Endothelial cell of umbilical vein (primary cell): ENCODE measurements at regions of chr17 and their contacts with region 1.

Region 1: GRCh38 chr17:40331743-40332641 is 23.0 kb downstream of the RARA start:
- DNase-seq: peak; percentile 73
- H3K4me3 ChIP-seq: no peak overlapping the region
- H3K27ac ChIP-seq: peak overlapping the region; percentile 61
- H3K4me1 ChIP-seq: peaks cover 38% of the 10 kb centered on the region
- H3K27me3 ChIP-seq: no peaks in the 10 kb centered on the region
- CTCF ChIP-seq: no peak
- POLR2A ChIP-seq: peak; percentile 30

Region 2: DNA sequence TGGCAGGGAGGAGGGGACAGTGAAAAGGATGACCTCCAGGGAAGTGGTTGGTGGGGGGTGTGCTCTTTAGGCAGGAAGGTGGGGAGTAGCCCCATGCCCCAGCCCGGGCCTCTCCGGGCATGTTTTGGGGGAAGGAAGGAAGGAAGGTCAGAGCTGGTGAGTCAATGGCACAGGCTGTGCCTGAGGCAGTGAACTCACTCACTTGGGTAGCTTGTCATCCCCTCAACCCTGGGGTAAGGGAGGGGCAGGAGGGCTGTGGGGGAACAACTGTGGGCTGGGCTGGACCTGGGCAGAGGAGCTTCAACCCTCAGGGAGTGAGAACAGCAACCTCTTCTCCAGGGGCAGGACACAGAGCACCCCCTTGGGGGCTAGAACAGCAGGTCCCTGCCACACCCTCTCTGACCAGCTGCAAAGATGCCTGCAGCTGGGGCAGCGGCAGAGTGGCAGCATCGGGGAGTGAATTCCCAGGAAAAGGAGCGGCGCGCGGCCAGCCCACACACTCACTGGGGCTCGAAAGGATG is 310.5 kb before region 1 on chr17:
- CTCF ChIA-PET with region 1: no interaction called
- POLR2A ChIA-PET with region 1: no interaction called
- dilution Hi-C with region 1: no loop called
- intact Hi-C with region 1: no loop called
- DNase-seq: peak; percentile 80
- H3K4me3 ChIP-seq: peak overlapping the region in 1 of 3 experiments; percentile 14
- H3K27ac ChIP-seq: peak overlapping the region; percentile 99
- H3K4me1 ChIP-seq: peaks cover 90% of the 10 kb centered on the region
- H3K27me3 ChIP-seq: no peaks in the 10 kb centered on the region
- CTCF ChIP-seq: no peak
- POLR2A ChIP-seq: peak; percentile 73

Region 3: GRCh38 chr17:40317880-40318829 is 13.8 kb before region 1 on chr17:
- CTCF ChIA-PET with region 1: interaction called, 10 read pairs
- POLR2A ChIA-PET with region 1: interaction called, 4 read pairs
- dilution Hi-C with region 1: no loop called
- intact Hi-C with region 1: loop called (anchors 1 kb)
- DNase-seq: peak; percentile 96
- H3K4me3 ChIP-seq: peak overlapping the region; percentile 63 to 66 (median 65)
- H3K27ac ChIP-seq: peak overlapping the region; percentile 83
- H3K4me1 ChIP-seq: peaks cover 72% of the 10 kb centered on the region
- H3K27me3 ChIP-seq: no peaks in the 10 kb centered on the region
- CTCF ChIP-seq: no peak
- POLR2A ChIP-seq: peak; percentile 75

Region 4: DNA sequence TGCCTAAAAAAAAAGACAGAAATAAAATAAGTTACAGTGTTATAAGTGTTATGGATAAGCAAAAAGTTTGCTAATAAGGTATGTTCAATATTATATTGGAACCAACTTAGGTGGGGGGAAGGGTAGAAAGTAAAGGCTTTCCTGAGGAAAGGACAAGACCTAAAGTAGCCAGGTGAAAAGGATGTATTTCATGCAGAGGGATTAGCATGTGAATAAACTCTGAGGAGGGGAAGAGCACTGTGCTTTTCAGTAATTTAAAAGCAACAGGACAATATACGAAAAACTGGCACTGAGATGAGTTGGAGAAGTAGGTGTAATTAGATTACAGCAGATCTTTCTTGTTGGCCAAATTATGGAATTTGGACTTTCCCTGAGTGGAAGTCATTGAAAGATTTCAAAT is 78.1 kb after region 1 on chr17:
- CTCF ChIA-PET with region 1: no interaction called
- POLR2A ChIA-PET with region 1: interaction called, 13 read pairs
- dilution Hi-C with region 1: no loop called
- intact Hi-C with region 1: no loop called
- DNase-seq: no peak
- H3K4me3 ChIP-seq: no peak overlapping the region
- H3K27ac ChIP-seq: no peak overlapping the region
- H3K4me1 ChIP-seq: no peaks in the 10 kb centered on the region
- H3K27me3 ChIP-seq: no peaks in the 10 kb centered on the region
- CTCF ChIP-seq: no peak
- POLR2A ChIP-seq: no peak